Activated naive CD4-positive, alpha-beta T cell treated with anti-CD3 and anti-CD28 coated beads for 36 hours (primary cell): ENCODE measurements at regions of chr5 and their contacts with region 1.

Region 1: GRCh38 chr5:93620487-93621326 is 37.7 kb downstream of the NR2F1 start:
- DNase-seq: peak; percentile 64
- H3K4me3 Mint-ChIP-seq: peak overlapping the region; percentile 76
- H3K27ac Mint-ChIP-seq: no peak overlapping the region
- H3K4me1 Mint-ChIP-seq: peaks cover 24% of the 10 kb centered on the region
- H3K27me3 Mint-ChIP-seq: peaks cover 43% of the 10 kb centered on the region

Region 2: DNA sequence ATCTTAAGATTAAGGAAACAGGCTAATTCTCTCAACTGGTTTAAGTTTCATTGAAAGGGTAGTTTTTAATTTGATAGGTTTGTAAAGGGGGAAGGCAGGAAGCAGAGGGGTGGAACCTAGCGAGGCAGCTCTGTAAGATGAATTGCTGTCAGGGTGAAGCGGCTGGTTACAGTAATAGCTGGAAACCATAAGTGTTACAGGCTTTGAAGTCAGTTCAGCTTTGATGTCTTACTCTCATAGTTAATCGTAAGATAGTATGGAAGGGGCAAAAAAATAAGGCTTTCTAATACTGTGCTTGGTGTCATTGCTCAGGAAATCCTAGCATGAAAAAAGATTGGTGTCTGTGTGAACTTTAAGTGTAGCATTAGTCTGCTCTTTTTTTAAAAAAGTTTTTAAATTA is 100.4 kb after region 1 on chr5:
- CTCF ChIA-PET with region 1: no interaction called
- intact Hi-C with region 1: loop called (anchors 1 kb)
- DNase-seq: peak; percentile 54
- H3K4me3 Mint-ChIP-seq: no peak overlapping the region
- H3K27ac Mint-ChIP-seq: no peak overlapping the region
- H3K4me1 Mint-ChIP-seq: peaks cover 7% of the 10 kb centered on the region
- H3K27me3 Mint-ChIP-seq: no peaks in the 10 kb centered on the region

Region 3: DNA sequence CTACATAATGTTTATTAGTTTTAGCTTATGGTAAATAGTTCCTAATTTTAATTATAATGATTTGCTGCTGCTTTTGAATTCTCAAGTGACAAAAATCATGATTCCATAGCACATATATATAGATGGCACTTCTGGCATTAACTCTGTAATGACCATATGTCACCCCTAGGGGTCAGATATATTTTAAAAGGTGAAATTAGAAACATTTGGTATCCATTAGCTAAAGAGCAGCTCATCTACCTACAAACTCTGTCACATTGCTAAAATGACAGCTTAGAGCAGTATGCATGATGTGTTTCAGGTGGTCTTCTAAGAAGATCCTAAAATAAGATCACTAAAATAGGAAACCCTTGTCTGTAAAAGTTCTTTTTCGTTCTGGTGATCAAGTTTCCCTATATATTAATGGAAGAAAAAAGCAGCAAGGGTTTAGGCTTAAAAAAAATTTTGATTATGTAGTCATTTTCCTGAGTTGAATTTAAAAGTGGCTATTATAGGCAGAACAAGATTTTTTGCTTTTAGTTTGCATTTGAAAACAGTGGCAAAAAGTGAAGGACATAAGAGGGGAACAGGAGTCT is 278.4 kb after region 1 on chr5:
- CTCF ChIA-PET with region 1: interaction called, 4 read pairs
- intact Hi-C with region 1: loop called (anchors 5 kb)
- DNase-seq: no peak
- H3K4me3 Mint-ChIP-seq: no peak overlapping the region
- H3K27ac Mint-ChIP-seq: no peak overlapping the region
- H3K4me1 Mint-ChIP-seq: no peaks in the 10 kb centered on the region
- H3K27me3 Mint-ChIP-seq: no peaks in the 10 kb centered on the region

Region 4: DNA sequence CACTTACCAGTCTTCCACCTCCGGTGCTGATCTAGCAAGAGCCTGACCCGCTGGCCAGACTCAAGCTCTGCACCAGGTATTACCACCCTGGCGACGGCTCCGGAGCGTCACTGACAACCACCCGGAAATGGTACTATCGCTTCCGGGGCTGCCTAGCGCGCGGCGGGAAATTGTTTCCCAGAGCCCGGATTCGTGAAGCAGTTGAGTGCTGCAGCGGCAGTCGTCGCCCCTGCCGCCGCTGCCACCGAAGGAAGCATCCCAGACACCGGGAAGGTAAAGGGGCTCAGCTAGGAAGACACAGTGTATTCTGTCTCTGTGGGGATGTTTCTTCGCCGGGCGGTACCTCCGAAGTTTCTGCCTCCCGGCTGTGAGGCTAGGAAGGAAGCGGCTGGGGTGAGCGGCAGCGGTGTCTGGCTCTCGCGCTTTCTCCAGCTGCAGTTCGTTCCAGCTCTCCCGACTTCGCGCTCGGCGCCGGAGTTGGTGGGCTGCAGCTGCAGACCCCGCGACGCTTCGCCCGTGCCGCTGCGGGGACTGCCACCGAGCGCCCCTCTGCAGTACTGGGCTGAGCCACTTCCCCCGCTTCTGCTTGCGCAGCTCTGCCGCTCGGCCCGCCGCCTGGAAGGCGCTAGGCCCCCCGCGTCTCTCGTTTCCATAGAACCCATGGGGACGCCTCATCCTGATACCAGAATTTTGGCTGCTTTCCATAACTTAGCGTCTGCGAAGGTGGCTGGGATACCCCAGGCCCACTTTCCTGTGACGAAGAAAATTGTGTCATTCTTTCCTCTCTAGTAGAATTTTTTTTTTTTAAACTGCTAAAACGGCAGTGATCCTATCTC is 998.0 kb after region 1 on chr5 and contains the starts of genes KIAA0825 and SLF1:
- CTCF ChIA-PET with region 1: no interaction called
- intact Hi-C with region 1: loop called (anchors 2 kb)
- DNase-seq: peak; percentile 93
- H3K4me3 Mint-ChIP-seq: peak within 1 kb of the TSS; percentile 96
- H3K27ac Mint-ChIP-seq: peak within 1 kb of the TSS; percentile 93
- H3K4me1 Mint-ChIP-seq: peaks cover 34% of the 10 kb centered on the region
- H3K27me3 Mint-ChIP-seq: no peaks in the 10 kb centered on the region
- total RNA-seq, gene KIAA0825: 0.07 to 0.24 TPM
- total RNA-seq, gene SLF1: 12.4 to 12.8 TPM